ENCODE measurements at regions of chr3 and their contacts with region 1.

Region 1: GRCh38 chr3:66138336-66139313 is 82.2 kb upstream of the SLC25A26 start:
- DNase-seq: peak; percentile 43 to 63
- ATAC-seq: peak; percentile 81 to 93; a peak in 5 of 6 replicates
- H3K4me3 ChIP-seq: no peak overlapping the region
- H3K27ac ChIP-seq: no peak overlapping the region
- H3K4me1 ChIP-seq: no peaks in the 10 kb centered on the region
- CTCF ChIP-seq: peak; percentile 67
- EP300 ChIP-seq: no peak
- POLR2A ChIP-seq: no peak
- RAD21 ChIP-seq: peak; percentile 78 to 86

Region 2: DNA sequence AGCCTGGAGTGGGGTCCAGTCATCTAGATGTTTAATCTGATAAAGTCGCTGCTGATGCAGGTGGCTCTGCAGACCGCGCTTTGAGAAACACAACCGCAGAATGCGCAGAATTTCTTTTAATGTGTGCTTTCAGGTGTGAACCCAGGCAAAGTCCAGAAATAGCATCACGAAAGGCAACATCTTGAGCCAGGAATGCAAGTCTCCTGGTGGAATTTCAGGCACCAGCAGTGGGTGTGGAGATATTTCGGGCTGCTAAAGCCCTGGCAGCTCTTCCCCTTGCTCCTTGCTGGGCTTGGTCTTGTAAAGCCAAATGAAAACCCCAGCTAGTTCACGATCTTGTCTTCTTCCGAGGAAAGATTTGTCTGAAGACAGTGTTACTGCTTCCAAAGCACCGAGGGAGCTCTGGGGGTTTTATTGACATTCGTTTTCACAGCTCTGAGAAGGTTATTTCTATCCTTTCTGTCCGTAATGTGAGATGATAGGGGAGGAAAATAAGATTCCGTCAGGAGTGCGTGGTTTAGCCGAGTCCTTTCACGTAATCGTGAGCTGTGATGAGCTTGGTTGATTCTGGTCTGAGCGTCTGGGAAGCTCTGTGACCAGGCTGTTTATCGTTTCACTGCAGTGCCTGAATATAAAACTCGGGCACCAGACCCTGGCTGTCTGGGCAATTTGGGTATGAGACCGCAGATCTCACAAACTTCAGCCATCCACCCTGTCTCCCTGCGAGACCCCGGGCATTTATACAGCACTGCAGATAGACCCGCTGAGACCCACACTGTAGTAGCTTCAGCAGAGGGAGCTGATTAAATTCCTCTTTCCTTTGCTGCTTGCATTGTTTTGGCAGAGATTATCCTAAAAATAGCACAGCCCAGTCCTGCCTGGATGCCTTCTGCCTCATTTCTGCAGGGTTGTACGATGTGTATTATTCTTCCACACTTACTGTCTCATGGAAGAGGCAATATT is 15.1 kb after region 1 on chr3:
- CTCF ChIA-PET with region 1: interaction called, 14 read pairs
- POLR2A ChIA-PET with region 1: no interaction called
- DNase-seq: no peak
- ATAC-seq: 0 out of 6 replicates have a peak, but pooled peaks of 1 of the 2 experiments have one; percentile 30
- H3K4me3 ChIP-seq: no peak overlapping the region
- H3K27ac ChIP-seq: no peak overlapping the region
- H3K4me1 ChIP-seq: no peaks in the 10 kb centered on the region
- CTCF ChIP-seq: no peak
- EP300 ChIP-seq: no peak
- POLR2A ChIP-seq: no peak
- RAD21 ChIP-seq: no peak

Measured in A549 (cell line).